BJ (cell line): ENCODE measurements at regions of chr1 and their contacts with region 1.

Region 1: DNA sequence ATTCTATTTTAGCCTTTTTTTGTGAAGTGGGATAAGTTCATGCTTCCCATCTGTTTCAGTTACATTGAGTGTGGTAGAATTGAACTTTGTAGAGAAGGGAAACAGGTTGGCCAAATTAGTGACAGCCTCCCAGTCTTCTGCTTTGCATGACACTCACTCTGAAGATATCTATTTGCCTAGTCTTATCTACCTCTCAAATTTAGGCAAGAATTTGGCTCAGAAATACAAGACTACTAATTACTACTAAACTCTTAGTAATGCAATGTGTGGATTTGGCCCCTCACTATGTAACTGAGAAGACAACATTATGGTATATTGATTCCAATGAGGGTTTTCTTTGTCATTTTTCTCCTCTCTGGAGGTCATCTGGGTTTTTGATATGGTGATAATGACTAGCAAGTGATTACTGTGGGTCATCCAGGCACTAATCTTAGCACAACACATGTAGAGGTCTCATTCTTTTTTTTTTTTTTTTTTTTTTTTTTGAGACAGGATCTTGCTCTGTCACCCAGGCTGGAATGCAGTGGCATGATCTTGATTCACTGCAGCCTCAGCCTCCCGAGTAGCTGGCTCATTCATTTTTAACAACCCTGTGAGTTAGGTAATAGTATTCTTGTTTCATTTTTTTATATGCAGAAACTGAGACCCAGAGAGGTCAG is 6.3 kb downstream of the FAM20B start:
- DNase-seq: no peak
- H3K4me3 ChIP-seq: no peak overlapping the region
- H3K27me3 ChIP-seq: no peaks in the 10 kb centered on the region
- CTCF ChIP-seq: no peak

Region 2: GRCh38 chr1:178725603-178726517 is 306.1 kb before region 1 on chr1:
- CTCF ChIA-PET with region 1: no interaction called
- POLR2A ChIA-PET with region 1: no interaction called
- DNase-seq: no peak
- H3K4me3 ChIP-seq: peak overlapping the region; percentile 90
- H3K27me3 ChIP-seq: no peaks in the 10 kb centered on the region
- CTCF ChIP-seq: peak; percentile 16; the same call in 1 of the 2 replicates

Region 3: GRCh38 chr1:179048339-179049124 is 16.5 kb after region 1 on chr1:
- CTCF ChIA-PET with region 1: no interaction called
- POLR2A ChIA-PET with region 1: interaction called, 15 read pairs
- DNase-seq: no peak
- H3K4me3 ChIP-seq: no peak overlapping the region
- H3K27me3 ChIP-seq: no peaks in the 10 kb centered on the region
- CTCF ChIP-seq: no peak

Region 4: GRCh38 chr1:179322557-179322956 is 290.6 kb after region 1 on chr1:
- CTCF ChIA-PET with region 1: no interaction called
- POLR2A ChIA-PET with region 1: no interaction called
- DNase-seq: no peak
- H3K4me3 ChIP-seq: no peak overlapping the region
- H3K27me3 ChIP-seq: no peaks in the 10 kb centered on the region
- CTCF ChIP-seq: no peak